Common myeloid progenitor, CD34-positive (primary cell): ENCODE measurements at regions of chr7 and their contacts with region 1.

Region 1: GRCh38 chr7:143504937-143505297 is 27.2 kb downstream of the TAS2R41 start:
- DNase-seq: peak; percentile 55 to 73 (median 73)
- H3K4me3 ChIP-seq: no peak overlapping the region
- H3K27ac ChIP-seq: no peak overlapping the region
- H3K4me1 ChIP-seq: peaks cover 0 to 33% (median 9%) of the 10 kb centered on the region in 4 experiments
- H3K27me3 ChIP-seq: no peaks in the 10 kb centered on the region

Region 2: DNA sequence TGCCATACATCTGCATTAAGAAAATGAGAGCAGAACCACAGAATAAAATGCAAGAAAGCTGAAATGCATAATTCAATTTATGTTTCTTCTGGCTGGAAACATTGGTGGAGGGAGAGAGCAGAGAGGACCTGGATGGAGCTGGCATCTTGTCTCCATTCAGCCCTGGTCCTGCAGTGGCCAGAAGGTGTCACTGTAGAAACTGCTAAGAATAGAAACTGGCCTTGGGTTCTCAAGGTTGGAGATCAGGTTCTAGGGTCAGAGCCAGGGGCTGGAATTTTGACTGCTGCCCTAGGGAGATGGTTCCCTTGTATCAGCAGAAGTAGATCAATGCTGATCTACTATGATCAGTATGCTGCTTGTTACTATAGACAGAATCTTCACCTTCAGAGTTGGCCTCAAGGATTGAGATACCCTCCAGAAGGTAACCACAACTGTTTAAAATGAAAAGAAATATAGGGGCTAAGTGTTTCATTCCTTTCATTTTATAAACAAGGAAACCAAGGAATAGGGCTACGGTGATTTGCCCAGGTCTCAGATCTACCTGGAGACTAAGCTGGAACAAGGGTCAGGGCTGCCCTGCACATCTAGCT is 14.1 kb before region 1 on chr7:
- CTCF ChIA-PET with region 1: interaction called, 31 read pairs
- POLR2A ChIA-PET with region 1: no interaction called
- DNase-seq: peak; percentile 39 to 42 (median 40)
- H3K4me3 ChIP-seq: no peak overlapping the region
- H3K27ac ChIP-seq: no peak overlapping the region
- H3K4me1 ChIP-seq: peaks cover 0 to 24% (median 10%) of the 10 kb centered on the region in 4 experiments
- H3K27me3 ChIP-seq: no peaks in the 10 kb centered on the region

Region 3: DNA sequence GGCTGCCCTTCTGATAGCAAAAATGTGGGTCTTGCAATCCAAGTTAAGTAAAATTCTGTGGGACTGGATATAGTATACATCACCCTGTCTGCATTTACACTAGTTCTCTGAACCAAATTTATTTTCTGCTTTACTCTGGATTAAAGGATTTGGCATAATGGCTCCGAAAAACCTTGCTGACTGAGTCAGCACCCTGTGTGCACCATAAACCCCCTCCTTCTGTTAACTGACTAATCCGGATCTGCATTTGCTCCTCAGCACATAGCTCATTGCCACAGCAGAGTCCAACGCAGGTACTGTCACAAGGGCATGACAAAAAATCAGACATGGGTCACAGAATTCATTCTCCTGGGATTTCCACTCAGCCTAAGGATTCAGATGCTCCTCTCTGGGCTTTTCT is 545.2 kb after region 1 on chr7:
- CTCF ChIA-PET with region 1: no interaction called
- POLR2A ChIA-PET with region 1: no interaction called
- DNase-seq: no peak
- H3K4me3 ChIP-seq: no peak overlapping the region
- H3K27ac ChIP-seq: no peak overlapping the region
- H3K4me1 ChIP-seq: no peaks in the 10 kb centered on the region
- H3K27me3 ChIP-seq: no peaks in the 10 kb centered on the region